Posterior vena cava (tissue), 2 donors: ENCODE measurements at regions of chr18 and their contacts with region 1.

Region 1: GRCh38 chr18:76892832-76893231 is 70.5 kb downstream of the ZNF236 start:
- DNase-seq: no peak

Region 2: DNA sequence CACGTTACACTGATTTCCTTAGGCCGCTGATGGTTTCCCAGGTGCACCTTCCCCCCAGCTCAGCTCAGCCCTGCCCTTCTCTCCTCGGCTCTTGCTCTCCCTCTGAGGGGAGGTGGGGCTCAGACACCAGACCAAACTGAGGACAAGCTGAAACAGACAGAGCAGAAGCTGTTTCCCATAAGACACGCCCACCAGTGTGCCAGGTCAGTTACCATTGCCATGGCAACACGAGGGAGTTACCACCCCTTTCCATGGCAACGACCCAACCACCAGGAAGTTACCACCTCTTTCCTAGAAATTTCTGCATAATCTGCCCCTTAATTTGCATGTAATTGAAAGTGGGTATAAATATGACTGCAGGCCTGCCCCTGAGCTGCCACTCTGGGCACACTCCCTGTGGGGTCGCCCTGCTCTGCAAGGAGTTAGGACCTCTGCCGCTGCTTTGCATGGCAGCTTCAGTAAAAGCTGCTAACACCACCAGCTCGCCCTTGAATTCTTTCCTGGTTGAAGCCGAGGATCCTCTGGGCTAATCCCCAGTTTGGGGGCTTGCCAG is 1344.4 kb before region 1 on chr18:
- intact Hi-C with region 1: no loop called
- DNase-seq: no peak

Region 3: GRCh38 chr18:76875390-76876325 is 17.2 kb before region 1 on chr18:
- intact Hi-C with region 1: no loop called
- DNase-seq: no peak

Region 4: DNA sequence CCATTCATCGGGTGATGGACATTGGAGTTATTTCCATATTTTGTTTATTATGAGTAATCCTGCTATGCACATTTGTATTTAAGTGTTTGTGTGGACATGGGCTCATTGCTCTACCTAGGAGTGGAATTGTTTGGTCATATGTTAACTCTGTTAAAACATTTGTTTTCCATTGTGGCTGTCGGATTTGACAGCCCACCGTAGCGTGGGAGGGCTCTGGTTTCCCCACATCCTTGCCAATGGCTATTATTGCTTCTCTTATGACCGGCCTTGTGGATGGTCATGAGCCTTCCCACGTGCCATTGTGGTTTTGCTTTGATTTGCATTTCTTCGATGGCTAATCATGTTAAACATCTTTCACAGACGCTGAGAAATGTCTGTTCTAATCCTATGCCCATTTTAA is 21.5 kb after region 1 on chr18:
- intact Hi-C with region 1: loop called in 1 of 2 experiments (anchors 2 kb)
- DNase-seq: no peak

Region 5: GRCh38 chr18:76928179-76928868 is 35.5 kb after region 1 on chr18:
- intact Hi-C with region 1: no loop called
- DNase-seq: no peak